ENCODE measurements at regions of chr1 and their contacts with region 1.

Region 1: GRCh38 chr1:226634166-226634588 is 85.6 kb downstream of the STUM start:
- DNase-seq: peak; percentile 78
- H3K4me3 Mint-ChIP-seq: peak overlapping the region; percentile 1
- H3K27ac Mint-ChIP-seq: peak overlapping the region; percentile 75
- H3K4me1 Mint-ChIP-seq: peaks cover 45% of the 10 kb centered on the region
- H3K27me3 Mint-ChIP-seq: no peaks in the 10 kb centered on the region

Region 2: GRCh38 chr1:226617109-226617508 is 17.1 kb before region 1 on chr1:
- CTCF ChIA-PET with region 1: no interaction called
- POLR2A ChIA-PET with region 1: no interaction called
- DNase-seq: no peak
- H3K4me3 Mint-ChIP-seq: no peak overlapping the region
- H3K27ac Mint-ChIP-seq: no peak overlapping the region
- H3K4me1 Mint-ChIP-seq: no peaks in the 10 kb centered on the region
- H3K27me3 Mint-ChIP-seq: peaks cover 5% of the 10 kb centered on the region

Region 3: DNA sequence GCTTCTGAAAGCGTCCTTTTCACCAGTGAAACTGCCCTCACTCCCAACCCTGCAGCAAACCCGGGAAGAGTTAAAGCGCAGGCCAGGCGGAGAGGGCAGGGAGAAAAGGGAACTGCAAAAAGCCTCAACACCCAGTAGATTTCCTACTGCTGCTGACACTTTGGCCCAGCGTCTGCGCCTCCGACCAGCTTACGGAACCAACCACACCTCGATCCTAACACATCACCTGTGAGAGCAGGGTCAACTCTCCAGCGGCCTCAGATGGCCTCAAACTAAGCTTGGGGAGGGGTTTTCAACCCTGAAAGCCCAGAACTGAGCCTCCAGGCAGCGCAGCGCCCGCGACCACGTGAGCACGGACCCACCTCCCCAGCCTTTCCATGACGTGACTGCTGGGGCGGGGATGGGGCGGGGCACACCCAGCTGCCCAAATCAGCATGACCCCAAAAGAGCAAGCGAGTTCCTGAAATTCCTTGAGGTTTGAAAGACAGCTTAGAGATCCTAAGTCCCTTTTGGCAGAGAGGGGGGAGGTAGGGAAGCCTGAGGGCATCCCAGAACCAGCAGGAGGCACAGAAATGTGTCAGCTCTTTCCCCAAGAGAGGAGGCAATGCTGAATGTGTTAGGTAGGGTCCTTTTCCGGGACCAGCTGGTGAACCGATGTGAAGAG is 45.8 kb after region 1 on chr1:
- CTCF ChIA-PET with region 1: interaction called, 11 read pairs
- POLR2A ChIA-PET with region 1: no interaction called
- DNase-seq: peak; percentile 78
- H3K4me3 Mint-ChIP-seq: peak overlapping the region; percentile 70
- H3K27ac Mint-ChIP-seq: peak overlapping the region; percentile 90
- H3K4me1 Mint-ChIP-seq: peaks cover 98% of the 10 kb centered on the region
- H3K27me3 Mint-ChIP-seq: no peaks in the 10 kb centered on the region

Region 4: DNA sequence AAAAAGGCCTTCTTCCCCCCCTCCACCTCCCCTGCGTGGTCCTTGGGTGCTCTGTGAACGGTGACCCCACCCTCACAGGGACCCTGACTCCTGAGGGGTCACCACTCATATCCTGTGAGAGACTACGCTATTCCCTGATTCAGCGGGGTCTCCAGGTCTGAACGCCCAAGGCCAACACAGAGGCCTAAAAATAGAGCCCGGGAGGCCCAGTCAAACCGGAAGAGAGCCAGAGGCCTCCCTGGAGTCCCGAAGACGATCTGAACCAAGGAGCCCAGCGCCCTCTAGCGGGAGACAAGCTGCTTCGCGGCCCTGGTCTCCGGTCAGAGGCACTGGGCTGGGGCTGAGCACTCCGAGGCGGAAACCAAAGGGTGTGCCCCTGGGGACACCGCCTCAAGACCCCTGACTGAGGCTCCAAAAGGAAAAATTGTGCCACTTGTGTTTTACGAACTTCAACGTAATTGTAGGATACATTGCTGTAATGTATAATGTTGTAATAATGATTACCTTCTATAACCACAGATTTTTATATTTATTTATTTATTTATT is 193.9 kb after region 1 on chr1:
- CTCF ChIA-PET with region 1: interaction called, 44 read pairs
- POLR2A ChIA-PET with region 1: no interaction called
- DNase-seq: peak; percentile 97
- H3K4me3 Mint-ChIP-seq: peak overlapping the region; percentile 28
- H3K27ac Mint-ChIP-seq: peak overlapping the region; percentile 91
- H3K4me1 Mint-ChIP-seq: peaks cover 16% of the 10 kb centered on the region
- H3K27me3 Mint-ChIP-seq: peaks cover 3% of the 10 kb centered on the region